ENCODE measurements at regions of chr20 and their contacts with region 1.

Region 1: DNA sequence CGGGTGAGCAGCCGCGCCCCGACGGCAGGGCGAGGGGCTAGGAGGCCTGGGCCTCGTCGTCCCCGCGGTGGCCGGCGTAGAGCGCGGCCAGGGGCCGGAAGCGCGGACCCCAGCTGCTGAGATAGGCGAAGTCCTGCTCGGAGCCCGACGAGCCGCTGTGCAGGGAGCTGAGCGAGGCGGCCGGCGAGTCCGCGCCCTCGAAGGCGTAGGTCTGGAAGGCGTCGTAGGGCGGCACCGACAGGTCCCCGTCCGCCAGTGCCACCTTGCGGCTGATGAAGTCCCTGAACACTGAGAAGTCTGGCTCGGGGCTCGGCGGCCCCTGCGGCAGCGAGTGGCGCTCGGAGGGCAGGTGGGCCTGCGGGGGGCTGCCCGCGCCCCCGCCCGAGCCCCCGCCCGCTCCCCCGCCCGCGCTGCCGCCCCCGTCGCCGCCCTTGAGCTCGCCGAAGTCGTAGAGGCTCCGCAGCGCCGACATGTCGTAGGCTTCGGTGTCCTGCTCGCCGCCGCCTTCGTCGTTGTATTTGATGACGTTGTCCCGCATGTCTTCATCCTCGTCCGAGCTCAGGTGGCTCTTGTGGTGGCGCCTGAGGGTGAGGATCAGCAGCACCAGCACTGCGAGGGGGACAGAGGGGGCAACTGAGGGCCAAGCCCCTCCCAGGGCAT is 56.5 kb downstream of the CD40 start:
- DNase-seq: peak; percentile 93
- ATAC-seq: peak; percentile 97
- H3K4me3 Mint-ChIP-seq: peak overlapping the region; percentile 62
- H3K27ac Mint-ChIP-seq: no peak overlapping the region
- H3K4me1 Mint-ChIP-seq: no peaks in the 10 kb centered on the region
- H3K27me3 Mint-ChIP-seq: peaks cover 54% of the 10 kb centered on the region
- CTCF ChIP-seq: peak; percentile 55

Region 2: DNA sequence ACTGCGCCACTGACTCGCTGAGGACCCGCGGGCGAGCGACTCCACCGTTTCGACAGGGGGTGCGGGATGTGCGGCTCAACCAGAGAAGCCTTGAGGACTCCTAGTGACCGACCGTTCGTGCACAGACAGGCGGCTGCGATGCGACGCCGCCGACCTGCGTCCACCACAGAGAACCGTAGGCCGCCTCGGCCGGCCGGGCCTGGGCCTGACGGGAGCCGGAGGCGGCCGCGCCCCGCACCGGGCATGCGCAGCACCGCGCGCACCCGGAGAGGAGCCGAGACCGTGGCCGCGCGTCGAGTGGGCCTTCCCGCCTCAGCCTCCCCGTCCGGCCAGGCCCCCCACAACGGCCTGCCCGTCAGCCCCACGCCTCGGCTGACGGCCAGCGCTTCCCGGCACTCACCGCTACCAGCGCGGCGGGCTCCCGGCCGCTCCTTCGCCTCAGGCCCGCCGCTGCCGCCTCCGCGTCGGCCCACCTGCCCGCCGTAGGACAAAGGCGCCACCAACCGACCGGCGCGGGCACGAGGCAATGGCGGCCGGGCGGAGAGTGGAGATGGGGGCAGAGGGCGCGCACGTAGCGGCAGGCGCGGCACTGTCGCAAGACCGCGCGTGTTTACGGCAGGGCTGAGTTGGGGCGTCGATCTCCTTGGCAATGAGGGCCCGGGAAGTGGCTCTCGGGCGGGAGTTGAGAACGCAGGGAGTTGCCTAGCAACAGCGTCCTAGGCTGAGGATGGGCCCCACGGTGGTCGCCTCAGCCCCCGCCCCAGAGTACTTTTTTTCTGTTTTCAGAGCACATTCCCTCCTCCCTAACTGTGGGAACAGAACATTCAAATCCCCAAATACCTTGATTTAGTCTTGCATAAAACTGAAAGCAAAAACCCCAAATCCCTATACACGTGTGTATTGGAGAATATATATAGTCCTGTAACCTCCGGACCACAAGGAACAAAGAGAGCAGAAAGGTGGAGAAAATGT is 84.9 kb before region 1 on chr20 and contains the start of gene NCOA5:
- CTCF ChIA-PET with region 1: no interaction called
- POLR2A ChIA-PET with region 1: no interaction called
- DNase-seq: peak; percentile 96
- ATAC-seq: peak; percentile 84
- H3K4me3 Mint-ChIP-seq: peak within 1 kb of the TSS; percentile 89
- H3K27ac Mint-ChIP-seq: peak within 1 kb of the TSS; percentile 89
- H3K4me1 Mint-ChIP-seq: peaks cover 37% of the 10 kb centered on the region
- H3K27me3 Mint-ChIP-seq: no peaks in the 10 kb centered on the region
- CTCF ChIP-seq: no peak
- total RNA-seq, gene NCOA5: 16.5 to 20.5 TPM (median 16.5 TPM) in 3 replicates

Region 3: DNA sequence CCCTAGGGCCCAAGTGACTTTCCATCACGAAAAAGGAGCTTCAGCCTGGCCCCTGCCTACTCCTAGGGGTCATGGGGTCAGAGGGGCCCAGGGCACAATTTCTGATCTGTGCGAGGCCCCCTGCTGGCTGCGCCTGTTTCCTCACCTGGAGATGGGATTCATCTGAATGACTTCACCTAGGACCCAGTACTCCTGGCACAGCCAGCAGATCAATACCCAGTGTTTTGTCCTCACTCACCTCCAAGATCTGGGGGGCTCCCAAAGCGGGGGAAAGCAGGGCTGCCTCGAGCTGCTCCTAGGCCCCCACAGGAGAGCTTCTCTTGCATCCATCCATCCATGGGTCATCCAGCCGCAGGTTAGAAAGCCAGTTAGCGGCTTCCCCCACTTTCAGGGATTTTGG is 22.7 kb before region 1 on chr20:
- CTCF ChIA-PET with region 1: interaction called, 12 read pairs
- POLR2A ChIA-PET with region 1: no interaction called
- DNase-seq: peak; percentile 77
- ATAC-seq: peak; percentile 87
- H3K4me3 Mint-ChIP-seq: no peak overlapping the region
- H3K27ac Mint-ChIP-seq: no peak overlapping the region
- H3K4me1 Mint-ChIP-seq: peaks cover 3% of the 10 kb centered on the region
- H3K27me3 Mint-ChIP-seq: no peaks in the 10 kb centered on the region
- CTCF ChIP-seq: peak; percentile 51

Region 4: GRCh38 chr20:46199198-46199597 is 24.6 kb after region 1 on chr20:
- CTCF ChIA-PET with region 1: interaction called, 22 read pairs
- POLR2A ChIA-PET with region 1: interaction called, 4 read pairs
- DNase-seq: peak; percentile 86
- ATAC-seq: peak; percentile 91
- H3K4me3 Mint-ChIP-seq: peak overlapping the region; percentile 60
- H3K27ac Mint-ChIP-seq: no peak overlapping the region
- H3K4me1 Mint-ChIP-seq: peaks cover 31% of the 10 kb centered on the region
- H3K27me3 Mint-ChIP-seq: peaks cover 8% of the 10 kb centered on the region; the same call in 1 of the 2 replicates
- CTCF ChIP-seq: no peak

Region 5: GRCh38 chr20:46215913-46216707 is 41.5 kb after region 1 on chr20:
- CTCF ChIA-PET with region 1: interaction called, 12 read pairs
- POLR2A ChIA-PET with region 1: no interaction called
- DNase-seq: peak; percentile 63
- ATAC-seq: peak; percentile 84
- H3K4me3 Mint-ChIP-seq: no peak overlapping the region
- H3K27ac Mint-ChIP-seq: no peak overlapping the region
- H3K4me1 Mint-ChIP-seq: peaks cover 21% of the 10 kb centered on the region
- H3K27me3 Mint-ChIP-seq: no peaks in the 10 kb centered on the region
- CTCF ChIP-seq: no peak

Measured in WTC11 (cell line).